Mammary epithelial cell (primary cell): ENCODE measurements at regions of chr7 and their contacts with region 1.

Region 1: GRCh38 chr7:158818325-158819213 is 10.7 kb downstream of the ESYT2 start:
- DNase-seq: peak; percentile 99
- H3K4me3 ChIP-seq: peak overlapping the region; percentile 35 to 55 (median 53)
- H3K27ac ChIP-seq: peak overlapping the region; percentile 100
- H3K4me1 ChIP-seq: peaks cover 63% of the 10 kb centered on the region
- H3K27me3 ChIP-seq: no peaks in the 10 kb centered on the region
- CTCF ChIP-seq: peak in 1 of 2 donors; percentile 14

Region 2: DNA sequence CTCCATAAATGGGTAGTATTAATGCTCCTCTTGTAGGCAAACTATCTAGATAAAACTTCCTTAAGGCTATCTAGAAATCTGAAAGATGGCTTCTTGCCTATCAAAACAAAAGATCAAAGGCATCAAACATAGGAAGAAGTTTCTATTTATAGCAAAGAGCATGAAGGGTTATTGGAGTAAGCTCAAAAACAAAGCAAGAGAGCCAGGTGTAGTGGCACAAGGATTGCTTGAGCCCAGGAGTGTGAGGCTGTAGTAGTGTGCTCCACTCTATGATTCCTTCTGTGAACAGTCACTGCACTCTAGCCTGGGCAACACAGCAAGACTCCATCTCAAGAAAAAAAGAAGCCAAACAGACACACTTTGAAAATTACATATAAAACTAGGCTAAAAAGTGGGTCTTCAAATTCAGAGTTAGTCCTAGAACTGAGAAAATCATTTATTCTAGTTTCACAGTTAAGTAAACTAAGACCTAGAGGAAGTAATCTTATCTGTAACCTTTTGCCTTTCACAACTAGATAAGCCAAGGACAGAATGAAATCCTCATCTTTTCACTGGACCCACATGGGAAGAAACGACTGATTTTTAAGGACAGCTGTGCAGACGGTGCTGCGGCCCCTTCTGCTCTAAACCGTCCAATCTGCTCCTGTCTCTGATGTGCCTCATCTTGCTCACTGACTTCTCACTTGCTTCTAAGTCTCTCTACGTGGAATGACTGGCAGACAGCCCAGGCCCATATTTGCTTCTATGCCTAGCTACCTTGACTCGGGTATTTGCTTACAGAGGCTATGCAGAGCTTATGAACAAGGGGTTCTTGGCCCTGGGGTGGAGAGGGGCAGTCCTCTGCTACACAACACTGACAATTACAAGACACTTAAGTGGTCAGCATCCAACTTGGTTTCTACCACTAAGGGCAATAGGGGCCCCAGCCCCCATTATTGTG is 39.2 kb before region 1 on chr7:
- CTCF ChIA-PET with region 1: no interaction called
- dilution Hi-C with region 1: no loop called
- in situ Hi-C with region 1: no loop called
- intact Hi-C with region 1: no loop called
- DNase-seq: no peak
- H3K4me3 ChIP-seq: no peak overlapping the region
- H3K27ac ChIP-seq: no peak overlapping the region
- H3K4me1 ChIP-seq: no peaks in the 10 kb centered on the region
- H3K27me3 ChIP-seq: no peaks in the 10 kb centered on the region
- CTCF ChIP-seq: no peak

Region 3: GRCh38 chr7:158802473-158803202 is 15.9 kb before region 1 on chr7:
- CTCF ChIA-PET with region 1: interaction called, 4 read pairs
- dilution Hi-C with region 1: no loop called
- in situ Hi-C with region 1: no loop called
- intact Hi-C with region 1: loop called (anchors 1 kb)
- DNase-seq: peak; percentile 36
- H3K4me3 ChIP-seq: peak overlapping the region in 1 of 3 experiments; percentile 2
- H3K27ac ChIP-seq: peak overlapping the region; percentile 60
- H3K4me1 ChIP-seq: peaks cover 23% of the 10 kb centered on the region
- H3K27me3 ChIP-seq: no peaks in the 10 kb centered on the region
- CTCF ChIP-seq: no peak

Region 4: DNA sequence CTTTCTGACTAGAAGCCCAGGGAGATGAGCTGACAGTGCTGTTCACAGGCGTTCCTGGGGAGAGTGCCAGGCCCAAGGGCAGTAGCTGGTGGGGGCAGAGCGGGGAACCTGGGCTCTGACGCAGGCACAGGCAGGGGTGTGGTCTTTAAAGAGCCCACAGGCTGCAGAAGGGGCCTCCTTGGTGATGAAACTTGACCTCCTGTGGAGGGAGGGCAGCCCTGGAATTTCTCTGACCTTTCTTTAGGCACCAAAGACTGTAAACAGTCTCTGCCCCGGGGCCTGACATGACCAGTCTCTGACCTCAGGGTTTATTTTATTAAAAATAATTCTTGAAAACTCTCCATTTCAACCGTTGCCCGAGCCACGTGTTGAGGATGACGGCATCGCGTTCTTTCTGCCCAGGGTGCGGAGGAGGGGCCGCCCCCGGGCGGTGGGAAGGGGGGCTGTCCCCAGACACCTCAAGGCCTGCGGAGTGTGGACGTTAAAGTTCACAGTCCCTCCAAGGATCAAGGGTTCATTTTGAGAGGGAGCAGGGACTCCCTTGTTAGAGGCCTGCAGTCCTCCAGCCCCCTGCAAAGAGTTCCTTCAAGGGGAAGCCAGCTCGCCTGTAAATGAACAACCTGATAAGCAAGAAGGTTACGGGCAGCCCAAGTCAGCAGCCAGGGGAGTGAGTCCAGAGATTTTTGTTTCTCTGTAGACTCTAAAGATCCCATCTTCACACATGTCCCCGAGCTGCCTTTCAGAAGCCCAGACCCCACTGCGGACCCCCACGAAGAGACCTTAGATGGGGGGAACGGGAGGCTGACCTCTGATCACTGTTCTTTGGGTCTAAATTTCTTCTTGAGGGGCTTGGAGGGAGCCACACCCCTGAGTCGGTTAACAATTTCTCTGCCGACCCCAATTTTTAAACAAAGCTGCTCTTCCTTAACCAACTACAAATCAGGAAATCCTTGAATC is 197.2 kb after region 1 on chr7:
- CTCF ChIA-PET with region 1: no interaction called
- dilution Hi-C with region 1: no loop called
- in situ Hi-C with region 1: no loop called
- intact Hi-C with region 1: no loop called
- DNase-seq: peak; percentile 3
- H3K4me3 ChIP-seq: no peak overlapping the region
- H3K27ac ChIP-seq: no peak overlapping the region
- H3K4me1 ChIP-seq: no peaks in the 10 kb centered on the region
- H3K27me3 ChIP-seq: no peaks in the 10 kb centered on the region
- CTCF ChIP-seq: no peak

Region 5: DNA sequence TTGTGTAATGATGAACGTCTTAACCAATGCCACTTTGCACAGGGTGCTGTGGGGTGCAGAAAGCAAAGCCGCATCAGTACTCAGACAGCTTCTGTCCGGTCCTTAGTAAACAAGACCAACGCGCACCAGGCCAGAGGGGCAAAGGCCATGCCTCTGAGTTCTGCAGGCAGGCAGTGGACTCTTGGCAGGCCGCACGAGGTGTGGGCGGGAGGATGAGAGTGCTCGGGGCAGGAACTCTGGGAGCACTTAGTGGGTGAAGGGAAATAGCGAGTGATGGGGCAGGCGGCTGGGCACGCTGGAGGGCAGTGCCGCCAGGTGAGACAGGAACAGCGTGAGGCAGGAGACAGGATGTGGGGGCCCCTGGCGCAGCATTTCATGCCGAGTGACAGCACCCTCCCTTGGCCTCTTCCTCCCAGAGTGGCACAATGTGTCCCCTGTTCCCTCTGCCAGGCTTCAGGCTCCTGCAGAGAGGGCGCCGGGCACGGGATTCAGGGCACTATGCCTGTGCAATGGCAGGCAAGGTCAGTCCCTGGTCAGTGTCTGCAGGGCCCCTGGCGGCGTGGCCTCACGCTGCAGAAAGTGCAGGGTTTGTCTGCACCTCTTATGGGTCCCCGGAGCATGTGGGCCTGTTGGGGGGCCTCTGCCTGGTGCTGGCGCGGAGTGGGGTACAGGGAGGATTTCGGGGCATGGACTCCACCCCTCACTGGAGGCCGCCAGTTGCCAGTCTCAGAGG is 265.7 kb after region 1 on chr7:
- CTCF ChIA-PET with region 1: no interaction called
- dilution Hi-C with region 1: no loop called
- in situ Hi-C with region 1: no loop called
- intact Hi-C with region 1: no loop called
- DNase-seq: no peak
- H3K4me3 ChIP-seq: no peak overlapping the region
- H3K27ac ChIP-seq: no peak overlapping the region
- H3K4me1 ChIP-seq: no peaks in the 10 kb centered on the region
- H3K27me3 ChIP-seq: no peaks in the 10 kb centered on the region
- CTCF ChIP-seq: no peak